AG04450 (cell line): ENCODE measurements at regions of chr14 and their contacts with region 1.

Region 1: DNA sequence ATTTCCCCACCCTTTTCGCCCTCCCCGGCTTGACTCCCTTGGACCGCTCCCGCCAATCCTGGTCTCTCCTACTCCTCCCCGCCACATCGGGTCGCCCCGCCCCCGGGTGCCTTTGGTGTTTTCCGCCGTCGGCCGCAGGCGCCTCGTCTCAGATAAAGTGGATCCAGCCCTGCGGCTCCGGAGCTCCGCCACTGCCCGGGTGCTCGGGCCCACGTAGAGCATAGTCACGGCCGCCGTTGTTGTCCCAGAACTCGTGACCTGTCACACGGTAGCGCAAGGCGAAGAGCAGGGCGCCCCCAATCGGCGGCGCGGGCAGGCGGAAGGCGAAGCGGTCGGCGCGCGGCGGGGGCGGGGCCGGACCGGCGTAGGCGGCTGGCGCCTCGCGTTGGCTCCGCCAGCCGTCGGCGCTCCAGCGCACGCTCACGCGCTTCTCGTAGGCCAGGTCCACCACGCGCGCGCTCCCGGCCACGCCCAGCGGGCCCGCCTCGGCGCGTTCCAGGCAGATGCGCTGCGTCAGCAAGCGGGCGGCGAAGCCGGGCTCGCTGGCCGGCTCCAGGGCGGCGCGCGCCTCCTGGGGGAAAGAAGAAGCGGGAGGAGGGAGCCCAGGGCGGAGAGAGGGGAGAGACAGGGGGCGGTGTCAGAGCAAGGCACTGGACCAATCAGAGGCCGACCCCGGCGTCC is 1.2 kb downstream of the PPP1R3E start:
- DNase-seq: peak; percentile 92
- H3K4me3 ChIP-seq: peak overlapping the region; percentile 79
- H3K27ac ChIP-seq: peak overlapping the region; percentile 98
- H3K27me3 ChIP-seq: no peaks in the 10 kb centered on the region
- CTCF ChIP-seq: peak; percentile 60

Region 2: GRCh38 chr14:23258256-23258655 is 43.2 kb before region 1 on chr14:
- CTCF ChIA-PET with region 1: interaction called, 11 read pairs
- POLR2A ChIA-PET with region 1: no interaction called
- DNase-seq: no peak
- H3K4me3 ChIP-seq: no peak overlapping the region
- H3K27ac ChIP-seq: no peak overlapping the region
- H3K27me3 ChIP-seq: peaks cover 15% of the 10 kb centered on the region
- CTCF ChIP-seq: no peak

Region 3: GRCh38 chr14:23269193-23269592 is 32.2 kb before region 1 on chr14:
- CTCF ChIA-PET with region 1: interaction called, 24 read pairs
- POLR2A ChIA-PET with region 1: no interaction called
- DNase-seq: no peak
- H3K4me3 ChIP-seq: no peak overlapping the region
- H3K27ac ChIP-seq: no peak overlapping the region
- H3K27me3 ChIP-seq: no peaks in the 10 kb centered on the region
- CTCF ChIP-seq: no peak

Region 4: GRCh38 chr14:23286020-23286905 is 15.2 kb before region 1 on chr14 and contains the start of gene HOMEZ:
- CTCF ChIA-PET with region 1: interaction called, 24 read pairs
- POLR2A ChIA-PET with region 1: interaction called, 11 read pairs
- DNase-seq: peak; percentile 95
- H3K4me3 ChIP-seq: peak within 1 kb of the TSS; percentile 79
- H3K27ac ChIP-seq: peak within 1 kb of the TSS; percentile 90
- H3K27me3 ChIP-seq: peaks cover 6% of the 10 kb centered on the region
- CTCF ChIP-seq: 0 out of 2 replicates have a peak, but pooled peaks have one; percentile 10
- polyA plus RNA-seq, gene HOMEZ: 11.2 and 13.2 TPM in 2 replicates

Region 5: GRCh38 chr14:23320774-23321571 is 19.5 kb after region 1 on chr14 and contains the start of gene PABPN1:
- CTCF ChIA-PET with region 1: interaction called, 27 read pairs
- POLR2A ChIA-PET with region 1: interaction called, 54 read pairs
- DNase-seq: peak; percentile 99
- H3K4me3 ChIP-seq: peak within 1 kb of the TSS; percentile 78
- H3K27ac ChIP-seq: peak within 1 kb of the TSS; percentile 93
- H3K27me3 ChIP-seq: no peaks in the 10 kb centered on the region
- CTCF ChIP-seq: no peak
- polyA plus RNA-seq, gene PABPN1: 174 and 182 TPM in 2 replicates